OCI-LY7 (cell line): ENCODE measurements at regions of chr6 and their contacts with region 1.

Region 1: GRCh38 chr6:3118353-3119039 is at the start of gene BPHL:
- DNase-seq: peak; percentile 95
- H3K4me3 ChIP-seq: peak within 1 kb of the TSS; percentile 81
- H3K27ac ChIP-seq: peak within 1 kb of the TSS; percentile 22
- H3K4me1 ChIP-seq: peaks cover 18% of the 10 kb centered on the region
- CTCF ChIP-seq: 0 out of 2 replicates have a peak, but pooled peaks have one; percentile 14
- total RNA-seq, gene BPHL: 9.7 and 12.3 TPM in 2 replicates

Region 2: GRCh38 chr6:3075522-3076113 is 42.9 kb before region 1 on chr6:
- CTCF ChIA-PET with region 1: no interaction called
- POLR2A ChIA-PET with region 1: interaction called, 13 read pairs
- intact Hi-C with region 1: no loop called
- DNase-seq: peak; percentile 60
- H3K4me3 ChIP-seq: peak overlapping the region; percentile 46
- H3K27ac ChIP-seq: peak overlapping the region; percentile 66
- H3K4me1 ChIP-seq: peaks cover 47% of the 10 kb centered on the region
- CTCF ChIP-seq: no peak